CD4-positive, alpha-beta T cell (primary cell): ENCODE measurements at regions of chr16 and their contacts with region 1.

Region 1: DNA sequence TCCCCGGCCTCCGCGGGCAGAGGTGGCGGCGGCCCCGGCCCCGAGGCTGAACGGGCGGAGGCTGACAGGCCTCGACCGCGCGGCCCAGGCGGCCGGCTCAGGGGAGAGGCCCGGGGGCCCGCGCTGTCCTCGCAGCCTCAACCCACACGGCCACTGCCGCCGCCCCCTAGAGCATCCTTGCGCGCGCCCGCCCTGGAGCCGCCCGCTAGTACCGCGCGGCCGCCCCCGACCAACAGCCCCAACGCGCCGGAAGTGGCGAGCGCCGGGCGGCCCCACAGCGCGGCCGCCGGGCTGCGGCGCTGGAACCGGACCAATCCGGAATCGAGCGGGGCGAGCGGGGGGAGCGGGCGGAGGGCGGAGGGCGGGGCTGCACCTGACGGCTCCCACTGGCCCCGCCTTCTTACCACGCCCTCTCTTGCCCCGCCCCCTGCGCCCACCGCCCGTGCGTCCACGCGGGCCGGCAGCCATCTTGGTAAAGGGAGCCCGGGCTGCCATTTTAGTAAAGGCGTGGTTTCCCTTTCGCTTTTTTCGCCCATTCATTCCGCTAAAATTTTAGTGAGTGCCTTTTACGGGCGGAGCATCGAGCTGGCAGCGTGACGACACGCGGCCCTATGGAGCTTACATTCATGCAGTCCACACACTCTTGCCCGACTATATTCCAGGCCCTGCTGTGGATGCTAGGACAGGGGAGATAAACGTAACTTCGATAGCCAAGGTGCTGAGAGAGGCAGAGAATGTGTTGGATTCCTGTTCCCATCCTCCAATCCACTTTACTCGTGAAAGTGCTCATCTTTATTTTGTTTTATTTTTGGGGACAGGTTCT is at the start of gene XPO6:
- DNase-seq: peak; percentile 96 to 100 (median 99)
- ATAC-seq: peak; percentile 83
- H3K4me3 ChIP-seq: peak within 1 kb of the TSS; percentile 98
- H3K4me3 Mint-ChIP-seq: peak within 1 kb of the TSS; percentile 89
- H3K27ac ChIP-seq: peak within 1 kb of the TSS; percentile 66 to 80
- H3K27ac Mint-ChIP-seq: peak within 1 kb of the TSS; percentile 81
- H3K4me1 ChIP-seq: peaks cover 35% of the 10 kb centered on the region
- H3K4me1 Mint-ChIP-seq: peaks cover 45% of the 10 kb centered on the region
- H3K27me3 ChIP-seq: no peaks in the 10 kb centered on the region
- H3K27me3 Mint-ChIP-seq: no peaks in the 10 kb centered on the region
- CTCF ChIP-seq: no peak
- total RNA-seq, gene XPO6: 378 to 390 TPM

Region 2: DNA sequence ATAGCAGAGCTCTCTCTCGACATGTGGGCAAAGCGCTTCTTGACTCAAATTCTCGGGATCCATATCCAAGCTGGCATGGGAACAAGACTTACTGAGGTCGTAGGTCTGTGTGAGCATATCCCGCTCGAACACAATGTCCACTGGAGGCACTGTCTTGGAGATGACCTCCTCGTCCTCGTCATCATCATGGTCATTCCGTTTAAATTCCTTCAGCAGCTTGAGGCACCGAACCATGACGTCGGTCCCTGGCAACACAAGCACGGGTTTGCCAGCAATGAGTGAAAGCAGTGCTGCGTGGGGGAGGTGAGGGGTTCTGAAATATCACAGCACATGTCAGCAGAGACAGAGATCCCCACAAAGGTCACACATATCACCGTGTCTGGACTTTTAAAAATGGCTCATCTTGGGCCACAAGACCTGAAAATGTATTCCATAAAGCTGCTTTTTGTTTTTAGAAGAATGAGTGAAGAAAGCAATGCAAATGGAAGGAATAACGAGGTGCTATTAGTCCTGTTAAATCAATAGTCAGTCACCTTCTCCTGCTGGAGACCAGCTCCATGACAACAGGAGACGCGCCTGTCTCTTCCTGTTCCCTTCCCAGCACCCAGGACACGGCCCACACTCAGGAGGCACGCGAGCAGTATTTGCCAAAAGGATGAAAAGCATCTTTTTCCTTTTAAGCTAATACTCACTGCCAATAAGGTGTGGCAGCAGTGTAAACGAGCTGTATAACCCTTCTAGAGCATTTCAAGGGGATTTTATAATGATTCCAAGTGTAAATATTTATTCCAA is 700.1 kb before region 1 on chr16:
- CTCF ChIA-PET with region 1: no interaction called
- POLR2A ChIA-PET with region 1: no interaction called
- intact Hi-C with region 1: no loop called
- DNase-seq: no peak
- ATAC-seq: no peak
- H3K4me3 ChIP-seq: no peak overlapping the region
- H3K4me3 Mint-ChIP-seq: no peak overlapping the region
- H3K27ac ChIP-seq: no peak overlapping the region
- H3K27ac Mint-ChIP-seq: no peak overlapping the region
- H3K4me1 ChIP-seq: no peaks in the 10 kb centered on the region
- H3K4me1 Mint-ChIP-seq: no peaks in the 10 kb centered on the region
- H3K27me3 ChIP-seq: no peaks in the 10 kb centered on the region
- H3K27me3 Mint-ChIP-seq: no peaks in the 10 kb centered on the region
- CTCF ChIP-seq: no peak

Region 3: DNA sequence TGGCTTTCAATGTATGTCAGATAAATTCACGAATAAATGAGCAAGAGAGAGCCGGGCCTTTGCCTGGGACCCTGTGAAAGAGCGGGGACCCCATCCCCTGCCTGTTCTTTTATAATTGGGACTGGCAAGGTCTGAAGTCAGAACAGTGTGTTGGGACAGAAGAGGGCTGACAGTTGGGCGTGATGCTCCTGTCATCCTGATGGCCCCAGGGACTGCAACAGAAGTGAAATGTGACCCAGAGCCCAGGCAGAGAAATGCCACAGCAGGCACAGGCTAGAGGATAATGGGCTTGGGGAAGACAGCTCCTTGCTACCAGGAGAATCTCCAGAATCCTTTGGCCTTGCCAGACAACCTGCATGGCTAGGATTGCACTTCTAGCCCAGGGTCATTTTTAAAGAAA is 186.3 kb before region 1 on chr16:
- CTCF ChIA-PET with region 1: no interaction called
- POLR2A ChIA-PET with region 1: no interaction called
- intact Hi-C with region 1: no loop called
- DNase-seq: no peak
- ATAC-seq: no peak
- H3K4me3 ChIP-seq: no peak overlapping the region
- H3K4me3 Mint-ChIP-seq: no peak overlapping the region
- H3K27ac ChIP-seq: no peak overlapping the region
- H3K27ac Mint-ChIP-seq: no peak overlapping the region
- H3K4me1 ChIP-seq: no peaks in the 10 kb centered on the region
- H3K4me1 Mint-ChIP-seq: no peaks in the 10 kb centered on the region
- H3K27me3 ChIP-seq: no peaks in the 10 kb centered on the region
- H3K27me3 Mint-ChIP-seq: no peaks in the 10 kb centered on the region
- CTCF ChIP-seq: no peak

Region 4: DNA sequence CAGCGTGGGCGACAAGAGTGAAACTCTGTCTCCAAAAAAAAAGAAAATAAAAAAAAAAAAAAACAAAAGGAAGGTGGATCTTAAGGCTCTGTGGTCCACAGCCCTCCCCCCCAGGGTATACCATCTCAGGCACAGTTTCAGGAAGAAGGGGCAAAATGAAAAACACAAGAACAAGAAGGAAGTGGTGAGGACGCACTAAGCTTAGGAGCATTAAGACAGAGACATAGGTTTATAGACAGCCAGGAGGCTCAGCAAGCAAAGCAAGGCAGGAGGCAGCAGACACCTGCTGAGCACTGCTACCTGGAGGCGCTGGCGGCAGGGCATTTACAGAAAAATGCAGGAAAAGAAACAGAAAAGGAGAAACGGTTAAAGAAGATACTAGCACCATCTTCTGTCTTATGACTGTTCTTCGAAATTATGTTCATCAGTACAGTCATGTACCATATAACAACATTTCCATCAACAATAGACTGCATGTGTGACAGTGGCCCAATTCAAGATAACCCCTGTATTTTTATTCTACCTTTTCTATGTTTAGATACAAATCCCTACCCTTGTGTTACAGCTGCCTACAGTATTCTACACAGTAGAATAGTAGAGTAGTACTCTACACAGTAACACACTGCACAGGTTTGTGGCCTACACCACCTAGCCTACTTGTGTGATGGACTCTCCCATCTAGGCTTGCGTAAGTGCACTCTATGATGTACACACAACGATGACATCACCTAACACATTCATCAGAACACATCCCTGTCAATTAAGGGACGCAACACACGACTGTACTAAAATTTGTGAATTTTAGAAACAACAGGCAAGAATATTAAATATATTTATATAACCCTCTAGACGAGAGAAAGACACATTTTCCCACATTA is 62.7 kb before region 1 on chr16:
- CTCF ChIA-PET with region 1: interaction called, 3 read pairs
- POLR2A ChIA-PET with region 1: interaction called, 14 read pairs
- intact Hi-C with region 1: no loop called
- DNase-seq: peak in 12 of 14 experiments; percentile 14 to 76 (median 48)
- ATAC-seq: peak; percentile 90
- H3K4me3 ChIP-seq: no peak overlapping the region
- H3K4me3 Mint-ChIP-seq: peak overlapping the region; percentile 42
- H3K27ac ChIP-seq: peak overlapping the region; percentile 60 to 74
- H3K27ac Mint-ChIP-seq: peak overlapping the region; percentile 97
- H3K4me1 ChIP-seq: peaks cover 42% of the 10 kb centered on the region
- H3K4me1 Mint-ChIP-seq: peaks cover 83% of the 10 kb centered on the region
- H3K27me3 ChIP-seq: no peaks in the 10 kb centered on the region
- H3K27me3 Mint-ChIP-seq: no peaks in the 10 kb centered on the region
- CTCF ChIP-seq: peak; percentile 27

Region 5: GRCh38 chr16:28188085-28188916 is 23.6 kb before region 1 on chr16:
- CTCF ChIA-PET with region 1: interaction called, 28 read pairs
- POLR2A ChIA-PET with region 1: interaction called, 48 read pairs
- intact Hi-C with region 1: loop called (anchors 1 kb)
- DNase-seq: peak in 3 of 14 experiments; percentile 43 to 54 (median 44)
- ATAC-seq: no peak
- H3K4me3 ChIP-seq: no peak overlapping the region
- H3K4me3 Mint-ChIP-seq: peak overlapping the region; percentile 76
- H3K27ac ChIP-seq: peak overlapping the region; percentile 67 to 81
- H3K27ac Mint-ChIP-seq: peak overlapping the region; percentile 93
- H3K4me1 ChIP-seq: peaks cover 78% of the 10 kb centered on the region
- H3K4me1 Mint-ChIP-seq: peaks cover 93% of the 10 kb centered on the region
- H3K27me3 ChIP-seq: no peaks in the 10 kb centered on the region
- H3K27me3 Mint-ChIP-seq: no peaks in the 10 kb centered on the region
- CTCF ChIP-seq: no peak

Region 6: DNA sequence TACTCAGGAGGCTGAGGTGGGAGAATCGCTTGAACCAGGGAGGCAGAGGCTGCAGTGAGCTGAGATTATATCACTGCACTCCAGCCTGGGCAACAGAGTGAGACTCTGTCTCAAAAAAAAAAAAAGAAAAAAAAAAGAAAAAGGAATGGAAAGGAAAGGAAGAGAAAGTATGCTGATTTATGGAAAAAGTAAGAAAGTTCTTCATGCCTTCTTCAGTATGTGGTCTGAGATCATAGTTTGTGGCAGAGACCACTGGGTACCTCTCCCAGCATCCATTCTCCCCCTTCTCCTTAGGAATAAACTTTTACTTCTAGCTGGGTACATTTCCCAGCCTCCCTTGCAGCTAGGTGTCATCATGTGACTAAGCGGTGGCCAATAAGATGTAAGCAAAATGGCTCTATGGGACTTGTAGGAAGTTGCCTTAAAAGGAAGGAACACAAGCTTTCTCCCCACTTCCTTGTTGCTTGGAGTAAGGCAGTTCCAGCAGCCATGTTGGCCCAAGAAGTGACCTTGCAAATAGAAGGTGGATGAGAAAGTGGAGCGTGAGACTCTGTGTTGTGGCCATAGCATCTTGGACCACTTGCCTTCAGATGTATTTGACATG is 25.9 kb after region 1 on chr16:
- CTCF ChIA-PET with region 1: no interaction called
- POLR2A ChIA-PET with region 1: no interaction called
- intact Hi-C with region 1: no loop called
- DNase-seq: no peak
- ATAC-seq: no peak
- H3K4me3 ChIP-seq: no peak overlapping the region
- H3K4me3 Mint-ChIP-seq: no peak overlapping the region
- H3K27ac ChIP-seq: no peak overlapping the region
- H3K27ac Mint-ChIP-seq: no peak overlapping the region
- H3K4me1 ChIP-seq: no peaks in the 10 kb centered on the region
- H3K4me1 Mint-ChIP-seq: no peaks in the 10 kb centered on the region
- H3K27me3 ChIP-seq: no peaks in the 10 kb centered on the region
- H3K27me3 Mint-ChIP-seq: no peaks in the 10 kb centered on the region
- CTCF ChIP-seq: no peak

Region 7: DNA sequence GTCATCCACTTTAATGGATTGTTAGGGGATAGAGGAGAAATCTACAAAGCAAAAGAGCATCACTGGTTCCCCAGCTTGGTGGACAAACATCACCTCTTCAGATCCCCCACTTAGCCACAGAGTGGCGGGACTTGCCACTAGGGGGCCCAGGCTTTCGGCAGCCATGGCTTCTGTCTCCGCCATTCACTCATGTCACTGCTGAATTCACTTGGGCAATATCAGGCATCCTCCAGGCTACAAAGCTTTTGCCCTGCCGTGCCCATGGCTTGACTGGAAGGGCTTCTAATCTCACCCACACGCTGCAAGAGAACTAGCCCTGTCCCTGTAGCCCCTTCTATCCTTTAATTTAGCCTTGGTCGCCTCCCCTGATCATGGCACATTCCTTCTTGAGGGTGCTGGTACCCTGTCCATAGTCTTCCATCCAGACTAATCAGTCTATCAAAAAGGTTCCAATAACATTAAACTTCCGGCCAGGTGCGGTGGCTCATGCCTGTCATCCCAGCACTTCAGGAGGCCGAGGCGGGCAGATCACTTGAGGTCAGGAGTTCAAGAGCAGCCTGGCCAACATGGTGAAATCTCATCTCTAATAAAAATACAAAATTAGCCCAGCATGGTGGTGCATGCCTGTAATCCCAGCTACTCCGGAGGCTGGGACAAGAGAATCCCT is 115.2 kb after region 1 on chr16:
- CTCF ChIA-PET with region 1: no interaction called
- POLR2A ChIA-PET with region 1: no interaction called
- intact Hi-C with region 1: no loop called
- DNase-seq: peak; percentile 49 to 74 (median 60)
- ATAC-seq: peak; percentile 88
- H3K4me3 ChIP-seq: no peak overlapping the region
- H3K4me3 Mint-ChIP-seq: no peak overlapping the region
- H3K27ac ChIP-seq: no peak overlapping the region
- H3K27ac Mint-ChIP-seq: peak overlapping the region; percentile 1
- H3K4me1 ChIP-seq: peaks cover 3% of the 10 kb centered on the region
- H3K4me1 Mint-ChIP-seq: peaks cover 6% of the 10 kb centered on the region
- H3K27me3 ChIP-seq: no peaks in the 10 kb centered on the region
- H3K27me3 Mint-ChIP-seq: no peaks in the 10 kb centered on the region
- CTCF ChIP-seq: peak; percentile 84

Region 8: GRCh38 chr16:28491970-28492474 is 280.1 kb after region 1 on chr16 and contains the start of gene CLN3:
- CTCF ChIA-PET with region 1: no interaction called
- POLR2A ChIA-PET with region 1: interaction called, 6 read pairs
- intact Hi-C with region 1: loop called in 1 of 2 experiments (anchors 10 kb)
- DNase-seq: peak; percentile 75 to 95 (median 82)
- ATAC-seq: peak; percentile 56
- H3K4me3 ChIP-seq: peak within 1 kb of the TSS; percentile 78
- H3K4me3 Mint-ChIP-seq: peak within 1 kb of the TSS; percentile 92
- H3K27ac ChIP-seq: peak within 1 kb of the TSS; percentile 90 to 97
- H3K27ac Mint-ChIP-seq: peak within 1 kb of the TSS; percentile 99
- H3K4me1 ChIP-seq: peaks cover 86% of the 10 kb centered on the region
- H3K4me1 Mint-ChIP-seq: peaks cover 65% of the 10 kb centered on the region
- H3K27me3 ChIP-seq: no peaks in the 10 kb centered on the region
- H3K27me3 Mint-ChIP-seq: no peaks in the 10 kb centered on the region
- CTCF ChIP-seq: no peak
- total RNA-seq, gene CLN3: 42.7 to 46.3 TPM